Activated CD8-positive, alpha-beta memory T cell treated with anti-CD3 and anti-CD28 coated beads, Interleukin-2, amount 10 ng/mL, durations not matched to agents 7 days and 5 days (primary cell): ENCODE measurements at regions of chr12 and their contacts with region 1.

Region 1: DNA sequence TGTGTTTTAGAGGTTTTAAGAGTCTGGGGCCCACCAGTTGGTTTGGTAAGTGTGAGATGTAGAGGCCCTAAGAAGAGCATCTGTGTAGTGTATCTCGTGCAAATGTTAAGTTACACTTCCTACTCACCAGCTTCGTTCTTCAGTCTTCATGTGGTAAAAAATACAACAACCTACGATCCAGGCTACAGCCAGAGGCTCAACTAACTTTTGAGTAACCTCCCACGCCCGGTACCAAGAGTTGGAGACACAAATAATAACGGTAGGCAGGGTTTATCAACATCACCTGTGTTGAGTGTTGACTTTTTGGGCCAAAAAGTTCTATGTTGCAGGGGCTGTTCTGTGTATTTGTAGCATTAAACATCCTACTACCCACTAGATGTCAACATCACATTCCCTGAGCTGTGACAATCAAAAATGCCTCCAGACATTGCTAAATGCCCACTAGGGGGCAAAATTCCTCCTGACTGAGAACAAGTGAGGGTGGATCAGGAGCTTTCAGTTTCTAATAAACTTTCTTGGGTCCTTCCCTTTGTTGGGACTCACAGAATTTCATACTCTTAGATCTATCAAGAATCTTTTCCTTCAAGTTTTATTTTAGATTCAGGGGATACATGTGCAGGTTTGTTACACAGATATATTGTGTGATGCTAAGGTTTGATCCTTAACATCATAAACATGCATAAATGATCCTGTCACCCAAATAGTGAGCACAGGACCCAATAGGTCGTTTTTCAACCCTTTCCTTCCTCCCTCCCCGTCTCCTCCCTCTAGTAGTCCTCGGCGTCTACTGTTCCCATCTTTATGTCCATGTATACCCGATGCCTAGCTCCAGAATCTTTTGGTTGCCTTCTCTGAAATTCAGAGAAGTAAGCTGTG is 94.7 kb downstream of the SLC2A13 start:
- DNase-seq: peak; percentile 72
- ATAC-seq: peak; percentile 92
- H3K4me3 Mint-ChIP-seq: peak overlapping the region; percentile 62
- H3K27ac Mint-ChIP-seq: peak overlapping the region; percentile 51
- H3K4me1 Mint-ChIP-seq: peaks cover 29% of the 10 kb centered on the region
- H3K27me3 Mint-ChIP-seq: no peaks in the 10 kb centered on the region

Region 2: GRCh38 chr12:40032433-40033241 is 21.5 kb after region 1 on chr12:
- CTCF ChIA-PET with region 1: interaction called, 12 read pairs
- DNase-seq: no peak
- ATAC-seq: no peak
- H3K4me3 Mint-ChIP-seq: no peak overlapping the region
- H3K27ac Mint-ChIP-seq: no peak overlapping the region
- H3K4me1 Mint-ChIP-seq: peaks cover 4% of the 10 kb centered on the region
- H3K27me3 Mint-ChIP-seq: no peaks in the 10 kb centered on the region

Region 3: GRCh38 chr12:40107098-40107802 is 96.1 kb after region 1 on chr12:
- CTCF ChIA-PET with region 1: interaction called, 93 read pairs
- DNase-seq: peak; percentile 91
- ATAC-seq: peak; percentile 30
- H3K4me3 Mint-ChIP-seq: peak overlapping the region; percentile 73
- H3K27ac Mint-ChIP-seq: no peak overlapping the region
- H3K4me1 Mint-ChIP-seq: peaks cover 33% of the 10 kb centered on the region
- H3K27me3 Mint-ChIP-seq: peaks cover 17% of the 10 kb centered on the region